GM10248 (cell line): ENCODE measurements at regions of chr5 and their contacts with region 1.

Region 1: GRCh38 chr5:122076664-122077365 is 1.2 kb downstream of the LOX start:
- DNase-seq: peak; percentile 58
- CTCF ChIP-seq: peak; percentile 83

Region 2: DNA sequence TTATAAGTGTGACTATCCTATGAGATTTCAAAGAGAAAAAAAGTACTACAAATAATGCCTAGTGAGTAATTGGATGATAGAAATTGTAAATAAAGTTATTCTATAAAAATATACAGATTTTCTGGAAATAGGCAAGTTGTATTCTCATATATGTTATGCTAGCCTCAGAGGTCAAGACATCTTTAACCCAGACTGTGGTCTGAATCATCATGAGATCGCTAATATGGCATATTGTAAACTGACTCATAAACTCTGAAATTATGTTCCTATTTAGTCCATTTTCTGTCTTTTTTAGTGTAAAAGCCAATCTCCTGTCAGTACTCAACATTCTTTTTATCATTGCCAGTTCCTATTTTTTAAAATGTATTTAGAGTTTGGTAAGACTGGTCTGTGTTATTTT is 13.0 kb before region 1 on chr5:
- CTCF ChIA-PET with region 1: interaction called, 10 read pairs
- POLR2A ChIA-PET with region 1: no interaction called
- DNase-seq: no peak
- CTCF ChIP-seq: no peak

Region 3: GRCh38 chr5:122129306-122129705 is 52.5 kb after region 1 on chr5 and contains the start of gene ZNF474:
- CTCF ChIA-PET with region 1: no interaction called
- POLR2A ChIA-PET with region 1: no interaction called
- DNase-seq: no peak
- CTCF ChIP-seq: no peak